ENCODE measurements at regions of chr7 and their contacts with region 1.

Region 1: DNA sequence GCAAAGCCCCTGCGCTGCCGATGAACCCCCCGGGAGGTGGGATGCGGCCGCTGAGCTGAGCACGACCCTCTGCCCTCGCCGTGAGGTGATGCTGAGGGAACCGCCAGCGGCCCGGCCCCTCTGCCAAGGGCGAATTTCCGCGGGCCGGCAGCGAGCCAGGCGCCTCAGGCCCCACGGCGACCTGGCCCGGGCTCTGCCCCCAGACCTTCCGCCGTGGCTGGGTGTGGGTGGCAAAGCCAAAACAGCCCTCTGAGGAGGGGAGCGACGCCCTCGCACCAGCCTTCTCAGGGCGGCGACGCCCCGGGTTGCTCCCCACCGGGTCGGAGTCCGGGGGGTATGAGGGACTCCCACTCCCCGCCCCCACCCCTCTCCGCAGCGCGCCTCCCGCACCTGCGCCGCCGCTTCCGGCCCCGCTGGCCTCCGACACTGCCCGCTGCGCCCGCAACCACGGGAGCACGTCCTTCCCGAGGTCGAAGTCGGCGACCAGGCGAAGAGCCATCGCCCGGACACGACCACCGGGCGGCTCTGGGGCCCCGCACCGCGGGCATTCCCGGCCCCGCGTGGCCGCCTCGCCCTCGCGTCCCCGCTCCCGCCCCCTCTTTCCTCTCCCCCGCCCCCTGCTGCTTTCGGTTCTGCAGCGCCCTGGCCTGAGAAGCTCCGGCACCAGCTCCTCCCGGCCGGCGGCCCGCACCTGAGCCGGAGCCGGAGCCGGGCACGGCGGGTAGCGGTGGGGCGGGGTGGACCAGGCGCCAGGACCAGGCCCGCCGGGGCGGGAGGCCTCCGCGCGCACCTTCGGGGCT is at the start of gene GSAP:
- DNase-seq: peak; percentile 44
- H3K4me3 Mint-ChIP-seq: peak within 1 kb of the TSS; percentile 68
- H3K27ac Mint-ChIP-seq: no peak within 1 kb of the TSS
- H3K4me1 Mint-ChIP-seq: peaks cover 32% of the 10 kb centered on the region
- H3K27me3 Mint-ChIP-seq: no peaks in the 10 kb centered on the region
- total RNA-seq, gene GSAP: 1.1 to 1.5 TPM

Region 2: GRCh38 chr7:77269360-77270093 is 146.5 kb before region 1 on chr7:
- CTCF ChIA-PET with region 1: no interaction called
- intact Hi-C with region 1: no loop called
- DNase-seq: no peak
- H3K4me3 Mint-ChIP-seq: no peak overlapping the region
- H3K27ac Mint-ChIP-seq: no peak overlapping the region
- H3K4me1 Mint-ChIP-seq: peaks cover 13% of the 10 kb centered on the region
- H3K27me3 Mint-ChIP-seq: no peaks in the 10 kb centered on the region

Region 3: DNA sequence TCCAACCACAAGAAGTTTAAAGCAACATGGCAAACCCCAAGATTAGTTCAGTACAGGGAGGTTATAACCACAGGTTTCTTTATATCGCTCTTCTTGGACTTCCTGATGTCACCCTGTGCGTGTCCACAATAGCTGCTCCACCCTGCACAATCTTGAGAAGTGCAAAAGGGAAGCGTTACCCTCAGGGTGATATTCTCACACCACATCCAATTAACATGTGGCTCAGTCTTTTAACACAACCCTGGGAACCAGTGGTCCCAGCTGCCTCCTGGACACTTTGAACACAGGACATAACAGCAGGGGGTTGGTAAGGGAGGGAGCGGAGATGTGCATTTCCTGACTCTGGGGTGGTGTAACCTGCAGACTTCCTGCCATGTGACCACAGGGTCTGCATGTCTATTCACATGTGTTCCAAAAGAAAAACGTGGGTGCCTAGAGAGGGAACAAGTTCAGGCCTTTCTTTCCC is 64.5 kb before region 1 on chr7:
- CTCF ChIA-PET with region 1: interaction called, 3 read pairs
- intact Hi-C with region 1: loop called (anchors 2 kb)
- DNase-seq: peak; percentile 54
- H3K4me3 Mint-ChIP-seq: peak overlapping the region; percentile 51
- H3K27ac Mint-ChIP-seq: peak overlapping the region; percentile 37
- H3K4me1 Mint-ChIP-seq: peaks cover 55% of the 10 kb centered on the region
- H3K27me3 Mint-ChIP-seq: no peaks in the 10 kb centered on the region

Region 4: DNA sequence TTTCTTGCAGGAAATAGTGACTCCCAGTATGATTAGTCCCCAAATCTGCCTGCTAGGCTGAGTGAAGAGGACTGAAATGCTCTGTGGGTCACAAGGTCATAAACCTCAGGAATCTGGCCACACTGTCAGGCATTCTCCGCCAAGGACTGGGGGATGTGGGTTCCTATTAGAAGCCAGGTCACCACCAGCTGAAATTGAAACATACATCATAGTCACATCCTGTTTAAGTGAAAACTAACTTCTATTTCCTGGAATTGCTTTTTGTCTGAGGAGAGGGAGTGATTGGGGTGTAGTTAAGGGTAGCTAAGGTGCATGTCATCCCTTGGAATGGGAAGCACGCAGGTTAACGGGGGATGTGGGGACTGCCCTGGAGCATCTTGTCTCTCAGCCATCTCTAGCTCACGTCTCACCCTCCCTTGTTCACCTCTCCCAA is 12.0 kb after region 1 on chr7:
- CTCF ChIA-PET with region 1: interaction called, 10 read pairs
- intact Hi-C with region 1: loop called (anchors 1 kb)
- DNase-seq: peak; percentile 47
- H3K4me3 Mint-ChIP-seq: peak overlapping the region; percentile 36
- H3K27ac Mint-ChIP-seq: peak overlapping the region; percentile 10
- H3K4me1 Mint-ChIP-seq: peaks cover 31% of the 10 kb centered on the region
- H3K27me3 Mint-ChIP-seq: peaks cover 2% of the 10 kb centered on the region